K562 (cell line): ENCODE measurements at regions of chr1 and their contacts with region 1.

Region 1: DNA sequence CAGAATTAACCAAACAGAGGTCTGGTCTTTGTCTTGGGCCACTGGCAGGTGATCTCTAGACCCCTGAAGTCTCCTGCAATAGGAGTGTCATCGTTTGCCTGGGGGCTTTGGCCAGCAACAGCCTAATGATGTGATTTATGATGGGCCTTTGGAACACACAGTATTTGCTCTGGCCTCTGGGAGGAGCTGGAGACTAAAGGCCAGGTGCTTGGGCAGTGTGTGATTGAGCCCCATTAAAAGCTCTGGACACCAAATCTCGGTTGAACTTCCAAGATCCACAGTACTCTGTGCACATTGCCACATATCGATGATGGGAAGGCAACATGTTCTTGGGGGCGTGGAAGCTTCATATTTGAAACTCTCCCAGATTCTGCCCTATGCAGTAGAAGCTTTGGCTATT is 32.0 kb upstream of the TLR5 start:
- DNase-seq: peak in 2 of 4 experiments; percentile 52 to 61
- ATAC-seq: peak; percentile 96
- H3K4me3 ChIP-seq: no peak overlapping the region
- H3K27ac ChIP-seq: no peak overlapping the region
- H3K4me1 ChIP-seq: no peaks in the 10 kb centered on the region; a peak in 2 of 5 replicates
- H3K27me3 ChIP-seq: no peaks in the 10 kb centered on the region; a peak in 1 of 5 replicates
- CTCF ChIP-seq: peak; percentile 66 to 83 (median 68)
- EP300 ChIP-seq: no peak
- POLR2A ChIP-seq: no peak
- RAD21 ChIP-seq: peak; percentile 88 to 92

Region 2: DNA sequence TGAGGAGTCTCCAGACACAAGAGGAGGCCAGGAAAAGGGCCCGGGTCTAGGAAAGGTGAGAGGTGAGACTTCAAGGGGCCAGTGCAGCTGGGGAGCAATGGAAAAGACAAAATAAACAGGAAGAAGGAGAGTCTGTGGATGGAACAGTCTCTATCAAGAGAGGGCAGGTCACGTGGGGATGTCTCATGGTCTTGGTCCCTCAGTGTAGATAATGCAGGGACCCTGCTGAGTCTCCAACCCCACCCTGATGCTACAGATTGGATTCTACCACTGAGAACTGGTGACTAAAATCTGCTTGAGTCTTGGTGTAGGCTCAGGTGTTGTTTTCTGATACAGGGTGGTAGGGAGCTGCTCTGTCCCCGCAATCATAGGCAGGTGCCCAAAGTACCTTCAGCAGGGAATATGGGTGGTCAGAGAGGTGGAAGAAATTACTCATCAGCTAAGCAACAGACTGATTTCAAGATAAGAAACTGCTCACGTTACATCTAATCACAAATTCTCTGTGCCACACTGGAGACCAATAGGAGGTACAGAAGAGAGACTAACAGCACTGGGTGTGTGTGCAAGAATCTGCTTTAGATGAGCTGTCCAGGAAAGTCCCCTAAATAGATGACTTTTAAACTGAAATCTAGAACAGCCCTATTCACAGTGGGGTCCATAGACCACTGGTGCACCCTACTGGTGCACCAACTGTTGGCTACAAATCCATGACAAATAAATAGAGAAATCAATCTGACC is 69.5 kb after region 1 on chr1:
- CTCF ChIA-PET with region 1: no interaction called
- POLR2A ChIA-PET with region 1: no interaction called
- in situ Hi-C with region 1: no loop called
- intact Hi-C with region 1: loop called (anchors 1 kb)
- DNase-seq: peak; percentile 31 to 75 (median 43)
- ATAC-seq: peak; percentile 60
- H3K4me3 ChIP-seq: no peak overlapping the region
- H3K27ac ChIP-seq: no peak overlapping the region; the same call in 2 of the 3 replicates
- H3K4me1 ChIP-seq: peaks cover 14 to 25% of the 10 kb centered on the region in 2 experiments
- H3K27me3 ChIP-seq: no peaks in the 10 kb centered on the region
- CTCF ChIP-seq: peak; percentile 45 to 74 (median 58); a peak in 4 of 6 replicates
- EP300 ChIP-seq: peak; percentile 31
- POLR2A ChIP-seq: no peak
- RAD21 ChIP-seq: peak; percentile 52 to 79

Region 3: DNA sequence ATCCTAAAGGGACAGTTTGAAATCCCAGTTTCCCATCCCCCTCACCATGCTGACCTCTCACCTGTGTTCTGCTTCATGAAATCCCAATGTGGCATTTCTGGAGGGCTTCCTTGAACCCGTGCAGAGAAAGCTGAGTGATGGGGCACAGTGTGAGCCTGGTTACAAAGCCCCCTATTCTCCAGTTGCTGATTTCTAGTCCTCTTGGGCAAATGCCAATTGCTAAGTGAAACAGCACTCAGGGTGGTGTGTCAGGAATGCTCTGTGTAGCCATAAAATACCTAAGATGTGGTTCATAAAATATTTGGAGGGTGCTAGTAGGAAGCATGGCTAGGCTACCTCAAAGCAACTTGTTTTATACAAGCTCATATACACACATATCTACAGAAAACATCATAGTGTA is 156.9 kb after region 1 on chr1:
- CTCF ChIA-PET with region 1: no interaction called
- POLR2A ChIA-PET with region 1: no interaction called
- in situ Hi-C with region 1: no loop called
- intact Hi-C with region 1: loop called (anchors 5 kb)
- DNase-seq: no peak
- ATAC-seq: no peak
- H3K4me3 ChIP-seq: no peak overlapping the region
- H3K27ac ChIP-seq: no peak overlapping the region
- H3K4me1 ChIP-seq: no peaks in the 10 kb centered on the region; a peak in 1 of 5 replicates
- H3K27me3 ChIP-seq: peaks cover 15 to 26% of the 10 kb centered on the region in 2 experiments
- CTCF ChIP-seq: no peak
- EP300 ChIP-seq: no peak
- POLR2A ChIP-seq: no peak
- RAD21 ChIP-seq: no peak

Region 4: GRCh38 chr1:223670458-223671168 is 495.6 kb after region 1 on chr1:
- CTCF ChIA-PET with region 1: no interaction called
- POLR2A ChIA-PET with region 1: no interaction called
- in situ Hi-C with region 1: no loop called
- intact Hi-C with region 1: loop called (anchors 1 kb)
- DNase-seq: peak; percentile 62 to 67 (median 65)
- ATAC-seq: peak; percentile 97
- H3K4me3 ChIP-seq: no peak overlapping the region
- H3K27ac ChIP-seq: no peak overlapping the region
- H3K4me1 ChIP-seq: no peaks in the 10 kb centered on the region
- H3K27me3 ChIP-seq: peaks cover 0 to 31% of the 10 kb centered on the region in 2 experiments; a peak in 3 of 5 replicates
- CTCF ChIP-seq: peak; percentile 77 to 85 (median 80)
- EP300 ChIP-seq: no peak
- POLR2A ChIP-seq: no peak
- RAD21 ChIP-seq: peak; percentile 39 to 74